Activated naive CD4-positive, alpha-beta T cell treated with anti-CD3 and anti-CD28 coated beads for 36 hours (primary cell): ENCODE measurements at regions of chr9 and their contacts with region 1.

Region 1: DNA sequence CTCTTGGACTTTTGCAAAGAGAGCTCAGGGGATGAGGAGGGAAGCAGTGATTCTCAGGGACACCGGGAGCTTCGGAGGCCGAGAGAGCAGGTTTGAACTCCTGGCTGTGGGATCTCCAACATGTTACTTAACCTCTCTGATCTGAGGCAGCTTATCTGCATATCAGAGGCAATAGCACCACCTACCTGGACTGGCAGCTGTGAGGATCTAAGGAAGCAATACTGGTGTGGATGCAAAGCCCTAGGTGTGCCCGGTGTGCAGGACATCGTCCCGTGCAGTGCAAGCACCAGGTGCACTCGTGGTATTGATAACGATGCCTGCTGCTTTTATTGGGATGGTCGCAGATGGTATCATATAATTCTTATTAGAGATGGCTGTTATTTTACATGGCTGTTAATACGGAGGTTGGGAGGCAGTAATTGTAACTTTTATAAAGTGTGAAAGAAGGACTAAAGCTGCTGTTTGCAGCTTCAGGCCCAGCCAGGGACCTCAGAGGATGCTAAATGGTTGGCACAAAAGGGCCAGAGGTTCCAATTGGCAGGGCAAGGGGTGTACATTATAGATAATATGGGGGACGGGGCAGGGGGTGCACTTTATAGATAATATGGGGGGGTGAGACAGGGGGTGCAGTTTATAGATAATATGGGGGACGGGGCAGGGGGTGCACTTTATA is 14.9 kb downstream of the COL5A1 start:
- DNase-seq: no peak
- H3K4me3 Mint-ChIP-seq: no peak overlapping the region
- H3K27ac Mint-ChIP-seq: no peak overlapping the region
- H3K4me1 Mint-ChIP-seq: no peaks in the 10 kb centered on the region
- H3K27me3 Mint-ChIP-seq: no peaks in the 10 kb centered on the region

Region 2: DNA sequence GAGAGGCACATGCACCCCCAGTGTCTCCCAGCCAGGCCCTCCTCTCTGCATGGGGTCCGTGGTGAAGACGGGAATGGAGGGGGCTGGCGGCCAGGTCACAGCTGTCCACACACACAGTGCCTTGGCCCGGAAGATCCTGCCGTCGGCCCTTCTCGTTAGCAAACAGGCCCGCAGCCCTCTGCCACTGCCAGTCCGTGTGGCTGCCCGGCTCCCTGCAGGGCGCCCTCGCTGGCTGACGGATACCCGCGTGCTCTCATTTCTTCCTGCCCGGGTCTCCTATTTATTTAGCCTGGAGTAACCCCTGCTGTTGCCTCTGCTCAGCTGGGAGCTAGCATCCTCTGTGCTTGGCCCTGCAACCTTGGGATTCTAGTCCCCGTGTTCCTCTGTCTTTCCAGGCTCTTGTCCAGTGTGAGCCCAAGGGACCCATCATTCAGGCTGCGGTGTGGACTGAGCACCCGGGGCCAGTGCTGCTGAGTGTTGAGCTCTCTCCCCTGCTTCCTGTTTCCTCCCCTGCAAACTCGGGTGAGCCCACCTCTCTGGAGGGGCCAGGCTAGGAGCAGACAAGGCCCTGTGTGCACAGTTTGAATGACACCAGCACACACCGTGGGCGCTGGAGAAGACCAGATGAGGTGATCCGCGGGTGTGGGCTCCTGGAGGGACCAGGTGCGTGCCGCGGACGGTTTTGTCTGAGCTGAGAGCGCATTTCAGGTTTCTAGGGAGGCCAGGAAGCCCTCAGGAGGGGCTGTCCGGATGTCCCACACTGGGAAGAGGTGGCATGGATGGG is 477.5 kb before region 1 on chr9:
- CTCF ChIA-PET with region 1: no interaction called
- intact Hi-C with region 1: loop called (anchors 10 kb)
- DNase-seq: no peak
- H3K4me3 Mint-ChIP-seq: no peak overlapping the region
- H3K27ac Mint-ChIP-seq: no peak overlapping the region
- H3K4me1 Mint-ChIP-seq: peaks cover 4% of the 10 kb centered on the region
- H3K27me3 Mint-ChIP-seq: peaks cover 3% of the 10 kb centered on the region